CD4-positive, alpha-beta memory T cell (primary cell): ENCODE measurements at regions of chr11 and their contacts with region 1.

Region 1: DNA sequence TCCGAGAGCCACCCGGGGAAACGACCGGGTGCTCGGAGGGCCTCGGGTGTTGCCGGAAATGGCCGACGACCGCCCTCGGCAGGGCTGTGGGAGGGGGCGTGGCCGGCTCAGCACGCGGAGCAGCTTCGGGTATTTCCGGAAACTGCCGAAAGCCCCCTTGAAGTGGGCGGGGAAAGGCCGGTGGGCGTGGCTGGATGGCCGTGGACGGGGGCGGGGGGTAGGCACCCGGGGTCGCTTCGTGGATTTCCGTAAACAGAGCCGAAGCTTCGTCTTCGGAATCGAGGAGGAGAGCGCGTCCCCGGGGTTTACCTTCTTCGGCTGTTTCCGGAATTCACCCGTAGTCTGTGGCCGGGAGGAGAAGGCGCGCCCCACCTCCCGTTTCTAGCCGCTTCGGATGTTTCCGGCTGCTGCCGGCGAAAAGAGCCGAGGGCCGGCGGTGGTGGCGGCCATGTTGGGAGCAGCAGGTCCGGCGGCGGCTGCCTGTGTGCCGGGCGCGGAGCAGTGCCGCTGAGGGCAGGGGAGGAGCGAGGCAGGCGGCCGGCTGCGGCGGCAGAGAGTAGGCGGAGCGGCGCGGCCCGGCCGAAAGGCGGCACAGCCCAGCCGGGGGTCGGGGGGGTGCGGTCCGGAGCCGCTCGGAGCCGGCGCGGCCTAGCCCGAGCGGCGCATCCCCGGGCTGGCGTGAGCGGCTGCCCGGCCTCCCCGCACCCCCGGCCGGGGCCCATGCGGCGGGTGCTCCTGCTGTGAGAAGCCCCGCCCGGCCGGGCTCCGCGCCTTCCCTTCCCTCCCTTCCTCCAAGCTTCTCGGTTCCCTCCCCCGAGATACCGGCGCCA is at the start of gene MARK2:
- DNase-seq: peak; percentile 99 to 100 (median 99)
- H3K4me3 ChIP-seq: peak within 1 kb of the TSS; percentile 87 to 88
- H3K4me3 Mint-ChIP-seq: peak within 1 kb of the TSS; percentile 87 to 95 (median 91)
- H3K27ac ChIP-seq: peak within 1 kb of the TSS; percentile 86
- H3K27ac Mint-ChIP-seq: peak within 1 kb of the TSS; percentile 85 to 97 (median 95)
- H3K4me1 ChIP-seq: peaks cover 48% of the 10 kb centered on the region
- H3K4me1 Mint-ChIP-seq: peaks cover 40 to 72% (median 54%) of the 10 kb centered on the region in 4 donors
- H3K27me3 ChIP-seq: no peaks in the 10 kb centered on the region
- H3K27me3 Mint-ChIP-seq: no peaks in the 10 kb centered on the region
- total RNA-seq, gene MARK2: 60.4 to 68.0 TPM

Region 2: DNA sequence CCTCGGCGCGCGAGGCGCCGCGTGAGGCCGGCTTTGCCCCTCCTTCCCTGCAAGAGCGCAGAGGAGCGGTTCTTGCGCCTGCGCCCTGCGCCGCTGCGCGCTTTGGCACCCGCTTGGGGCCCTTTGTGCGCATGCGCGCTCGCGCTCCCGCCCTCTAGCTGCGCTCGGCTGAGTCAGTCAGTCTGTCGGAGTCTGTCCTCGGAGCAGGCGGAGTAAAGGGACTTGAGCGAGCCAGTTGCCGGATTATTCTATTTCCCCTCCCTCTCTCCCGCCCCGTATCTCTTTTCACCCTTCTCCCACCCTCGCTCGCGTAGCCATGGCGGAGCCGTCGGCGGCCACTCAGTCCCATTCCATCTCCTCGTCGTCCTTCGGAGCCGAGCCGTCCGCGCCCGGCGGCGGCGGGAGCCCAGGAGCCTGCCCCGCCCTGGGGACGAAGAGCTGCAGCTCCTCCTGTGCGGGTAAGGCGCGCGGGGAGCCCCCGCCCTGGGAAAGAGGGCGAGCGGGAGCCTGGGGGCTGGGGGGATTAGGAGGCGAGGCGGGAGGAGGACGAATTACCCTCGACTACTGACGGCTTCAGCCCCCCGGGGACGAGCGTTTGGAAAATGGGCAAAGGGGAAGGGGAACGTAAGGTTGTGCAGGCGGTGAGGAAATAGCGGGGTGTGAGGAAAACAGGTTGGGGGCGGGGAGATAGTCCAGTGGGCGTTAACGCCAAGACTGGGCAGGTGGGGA is 157.4 kb before region 1 on chr11 and contains the start of gene RTN3:
- CTCF ChIA-PET with region 1: no interaction called
- POLR2A ChIA-PET with region 1: no interaction called
- intact Hi-C with region 1: no loop called
- DNase-seq: peak; percentile 98 to 99 (median 98)
- H3K4me3 ChIP-seq: peak within 1 kb of the TSS; percentile 54 to 93
- H3K4me3 Mint-ChIP-seq: peak within 1 kb of the TSS; percentile 89 to 98 (median 92)
- H3K27ac ChIP-seq: peak within 1 kb of the TSS; percentile 86
- H3K27ac Mint-ChIP-seq: peak within 1 kb of the TSS; percentile 71 to 98 (median 91)
- H3K4me1 ChIP-seq: peaks cover 22% of the 10 kb centered on the region
- H3K4me1 Mint-ChIP-seq: peaks cover 18 to 30% (median 24%) of the 10 kb centered on the region in 4 donors
- H3K27me3 ChIP-seq: no peaks in the 10 kb centered on the region
- H3K27me3 Mint-ChIP-seq: peaks cover 0 to 1% of the 10 kb centered on the region in 2 donors
- total RNA-seq, gene RTN3: 41.7 to 41.8 TPM

Region 3: GRCh38 chr11:63866211-63866610 is 27.3 kb after region 1 on chr11:
- CTCF ChIA-PET with region 1: interaction called, 37 read pairs
- POLR2A ChIA-PET with region 1: interaction called, 46 read pairs
- intact Hi-C with region 1: loop called (anchors 2 kb)
- DNase-seq: peak; percentile 76 to 88 (median 82)
- H3K4me3 ChIP-seq: no peak overlapping the region
- H3K4me3 Mint-ChIP-seq: peak overlapping the region; percentile 4 to 79 (median 66)
- H3K27ac ChIP-seq: peak overlapping the region; percentile 30
- H3K27ac Mint-ChIP-seq: peak overlapping the region; percentile 81 to 92 (median 85)
- H3K4me1 ChIP-seq: peaks cover 81% of the 10 kb centered on the region
- H3K4me1 Mint-ChIP-seq: peaks cover 59 to 83% (median 75%) of the 10 kb centered on the region in 4 donors
- H3K27me3 ChIP-seq: no peaks in the 10 kb centered on the region
- H3K27me3 Mint-ChIP-seq: no peaks in the 10 kb centered on the region

Region 4: GRCh38 chr11:63888170-63889086 is 49.5 kb after region 1 on chr11:
- CTCF ChIA-PET with region 1: interaction called, 39 read pairs
- POLR2A ChIA-PET with region 1: interaction called, 83 read pairs
- intact Hi-C with region 1: loop called (anchors 1 kb)
- DNase-seq: peak; percentile 70 to 83 (median 75)
- H3K4me3 ChIP-seq: peak overlapping the region; percentile 76 to 92
- H3K4me3 Mint-ChIP-seq: peak overlapping the region; percentile 90 to 99 (median 96)
- H3K27ac ChIP-seq: peak overlapping the region; percentile 69
- H3K27ac Mint-ChIP-seq: peak overlapping the region; percentile 94 to 99 (median 97)
- H3K4me1 ChIP-seq: peaks cover 81% of the 10 kb centered on the region
- H3K4me1 Mint-ChIP-seq: peaks cover 56 to 81% (median 69%) of the 10 kb centered on the region in 4 donors
- H3K27me3 ChIP-seq: no peaks in the 10 kb centered on the region
- H3K27me3 Mint-ChIP-seq: no peaks in the 10 kb centered on the region

Region 5: DNA sequence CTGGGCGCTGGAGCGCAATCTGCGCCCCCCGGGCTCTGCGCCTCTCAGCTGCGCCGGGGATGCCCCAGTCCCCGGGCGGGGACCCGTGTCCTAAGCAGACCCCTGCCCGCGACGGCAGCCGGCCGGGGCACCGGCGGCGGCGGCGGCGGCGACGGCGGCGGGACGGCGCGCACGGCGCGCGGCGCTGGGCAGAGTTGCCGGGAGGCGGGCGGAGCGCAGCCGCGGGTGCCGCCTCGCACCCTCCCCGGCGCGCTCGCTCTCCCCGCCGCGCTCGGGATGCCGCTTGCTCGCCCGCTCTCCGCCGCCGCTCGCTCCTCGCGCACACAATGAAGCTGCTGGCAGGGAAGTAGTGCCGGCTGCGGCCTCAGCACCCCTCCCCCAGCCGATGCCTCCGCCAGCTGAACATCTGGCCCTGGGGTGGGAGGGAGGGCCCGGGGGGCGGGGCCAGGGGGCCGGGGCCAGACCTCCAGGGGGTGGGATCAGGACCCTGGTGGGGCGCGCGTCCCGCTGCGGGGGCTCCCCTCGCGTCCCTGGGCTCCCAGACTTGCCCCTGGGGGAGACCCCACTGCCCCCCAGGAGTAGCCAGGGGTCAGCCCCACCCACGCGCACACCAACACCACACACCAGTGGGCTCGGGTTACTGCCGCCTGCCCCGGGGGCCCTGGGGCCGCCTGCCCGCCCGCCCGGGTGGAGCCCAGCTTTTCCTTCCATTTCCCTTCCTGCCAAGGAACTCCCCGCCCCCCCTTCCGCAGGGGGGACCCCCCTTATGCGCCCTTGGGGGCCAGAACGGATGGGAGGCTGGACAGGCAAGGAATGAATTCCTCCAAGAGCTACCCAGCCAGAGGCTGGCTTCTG is 78.2 kb after region 1 on chr11 and contains the start of gene RCOR2:
- CTCF ChIA-PET with region 1: interaction called, 74 read pairs
- POLR2A ChIA-PET with region 1: interaction called, 21 read pairs
- intact Hi-C with region 1: loop called (anchors 1 kb)
- DNase-seq: peak; percentile 50 to 62 (median 57)
- H3K4me3 ChIP-seq: peak within 1 kb of the TSS; percentile 42 to 45
- H3K4me3 Mint-ChIP-seq: peak within 1 kb of the TSS; percentile 72 to 89 (median 80)
- H3K27ac ChIP-seq: no peak within 1 kb of the TSS
- H3K27ac Mint-ChIP-seq: peak within 1 kb of the TSS in 3 of 7 donors; percentile 55 to 80 (median 70)
- H3K4me1 ChIP-seq: peaks cover 28% of the 10 kb centered on the region
- H3K4me1 Mint-ChIP-seq: peaks cover 8 to 26% (median 12%) of the 10 kb centered on the region in 4 donors
- H3K27me3 ChIP-seq: no peaks in the 10 kb centered on the region
- H3K27me3 Mint-ChIP-seq: no peaks in the 10 kb centered on the region
- total RNA-seq, gene RCOR2: not detected

Region 6: DNA sequence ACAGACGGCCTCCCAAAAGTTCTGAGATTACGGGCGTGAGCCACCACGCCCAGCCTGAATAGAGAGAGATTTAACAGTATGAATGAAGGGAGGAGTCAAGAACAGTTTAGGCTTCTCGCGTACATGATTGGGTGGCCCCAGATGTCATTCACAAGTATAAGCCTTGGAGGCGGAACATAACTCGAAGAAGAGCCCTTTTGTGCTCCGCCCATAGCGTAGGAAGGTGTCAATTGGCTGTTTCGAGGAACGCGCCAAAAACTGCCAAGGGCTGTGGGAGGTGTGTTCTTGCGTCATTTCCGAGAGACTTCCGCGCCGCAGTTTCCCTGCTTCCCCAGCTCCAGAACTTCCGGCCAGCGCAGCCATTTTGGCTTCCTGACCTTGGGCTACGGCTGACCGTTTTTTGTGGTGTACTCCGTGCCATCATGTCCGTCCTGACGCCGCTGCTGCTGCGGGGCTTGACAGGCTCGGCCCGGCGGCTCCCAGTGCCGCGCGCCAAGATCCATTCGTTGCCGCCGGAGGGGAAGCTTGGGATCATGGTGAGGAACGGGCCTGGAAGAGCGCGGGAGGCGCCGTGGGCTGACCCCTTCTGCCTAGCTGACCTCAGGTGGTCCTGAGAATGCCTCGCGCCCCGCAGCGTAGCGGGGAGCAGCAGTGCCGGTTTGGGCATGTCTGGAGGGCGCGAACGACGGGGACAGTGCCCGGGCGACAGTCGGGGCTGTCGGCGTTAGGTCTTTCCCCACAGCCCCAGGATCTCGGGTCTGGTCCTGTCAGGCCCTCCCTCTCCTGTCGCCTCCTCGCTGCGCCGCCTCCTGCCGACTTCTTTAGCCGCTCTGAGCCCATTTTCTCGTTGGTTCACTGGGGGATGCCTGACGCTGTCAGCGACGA is 135.6 kb after region 1 on chr11 and contains the start of gene COX8A:
- CTCF ChIA-PET with region 1: interaction called, 6 read pairs
- POLR2A ChIA-PET with region 1: interaction called, 15 read pairs
- intact Hi-C with region 1: loop called (anchors 1 kb)
- DNase-seq: peak; percentile 94 to 98 (median 96)
- H3K4me3 ChIP-seq: peak within 1 kb of the TSS; percentile 90 to 100
- H3K4me3 Mint-ChIP-seq: peak within 1 kb of the TSS; percentile 96 to 100 (median 100)
- H3K27ac ChIP-seq: peak within 1 kb of the TSS; percentile 95
- H3K27ac Mint-ChIP-seq: peak within 1 kb of the TSS; percentile 99 to 100 (median 99)
- H3K4me1 ChIP-seq: peaks cover 20% of the 10 kb centered on the region
- H3K4me1 Mint-ChIP-seq: peaks cover 17 to 40% (median 31%) of the 10 kb centered on the region in 4 donors
- H3K27me3 ChIP-seq: no peaks in the 10 kb centered on the region
- H3K27me3 Mint-ChIP-seq: peaks cover 2% of the 10 kb centered on the region in 2 donors
- total RNA-seq, gene COX8A: 113 to 130 TPM

Region 7: DNA sequence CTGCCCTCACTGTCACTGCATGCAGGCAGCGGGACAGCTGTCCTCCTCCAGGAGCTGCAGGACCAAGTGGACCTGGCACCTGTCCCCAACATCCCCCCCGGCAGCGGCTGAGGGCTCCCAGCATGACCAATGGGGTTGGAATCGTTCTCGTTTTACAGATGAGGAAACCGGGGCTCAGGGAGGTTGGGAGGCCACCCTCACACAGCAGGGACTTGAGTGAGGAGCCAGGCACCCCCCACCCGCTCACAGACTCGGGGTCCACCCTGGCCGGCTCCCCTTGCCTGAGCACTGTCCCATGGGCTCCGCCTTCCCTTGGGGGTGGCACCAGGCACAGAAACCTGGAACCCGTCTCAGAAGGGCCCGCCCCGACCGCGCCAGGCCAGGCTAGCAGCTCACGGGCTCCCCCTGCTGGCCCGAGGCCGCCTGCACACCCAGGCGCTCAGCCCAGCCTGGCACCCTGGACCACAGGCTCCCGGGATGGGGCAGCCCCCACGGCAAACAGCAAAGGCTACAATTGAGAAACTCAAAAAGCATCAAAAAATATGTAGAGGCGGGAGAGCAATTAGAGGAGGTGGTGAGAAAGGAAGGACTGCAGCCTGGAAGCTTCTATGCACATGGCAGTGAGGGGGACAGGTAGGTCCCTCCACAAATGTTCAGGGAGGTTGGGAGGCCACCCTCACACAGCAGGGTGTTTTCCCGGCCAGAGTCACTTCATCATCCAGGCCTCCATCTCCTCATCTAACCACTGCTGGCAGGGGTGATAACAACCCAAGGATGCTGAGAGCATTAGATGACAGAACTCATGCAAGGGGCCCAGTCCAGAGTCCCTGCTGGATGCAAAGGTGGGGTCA is 314.2 kb after region 1 on chr11:
- CTCF ChIA-PET with region 1: interaction called, 55 read pairs
- POLR2A ChIA-PET with region 1: no interaction called
- intact Hi-C with region 1: loop called (anchors 1 kb)
- DNase-seq: peak; percentile 56 to 69 (median 63)
- H3K4me3 ChIP-seq: no peak overlapping the region
- H3K4me3 Mint-ChIP-seq: peak overlapping the region in 1 of 8 donors; percentile 26
- H3K27ac ChIP-seq: no peak overlapping the region
- H3K27ac Mint-ChIP-seq: no peak overlapping the region
- H3K4me1 ChIP-seq: no peaks in the 10 kb centered on the region
- H3K4me1 Mint-ChIP-seq: peaks cover 0 to 6% (median under 1%) of the 10 kb centered on the region in 4 donors
- H3K27me3 ChIP-seq: no peaks in the 10 kb centered on the region
- H3K27me3 Mint-ChIP-seq: no peaks in the 10 kb centered on the region